Activated CD4-positive, alpha-beta memory T cell treated with anti-CD3 and anti-CD28 coated beads, Interleukin-2, amount 10 ng/mL, durations not matched to agents 7 days and 5 days (primary cell): ENCODE measurements at regions of chr3 and their contacts with region 1.

Region 1: GRCh38 chr3:18717598-18717997 is 292.5 kb upstream of the SATB1 start:
- DNase-seq: no peak
- H3K4me3 Mint-ChIP-seq: peak overlapping the region; percentile 43
- H3K27ac Mint-ChIP-seq: peak overlapping the region; percentile 99
- H3K4me1 Mint-ChIP-seq: peaks cover 72% of the 10 kb centered on the region
- H3K27me3 Mint-ChIP-seq: no peaks in the 10 kb centered on the region

Region 2: GRCh38 chr3:18424729-18425640 is 292.6 kb before region 1 on chr3 and contains the start of gene SATB1:
- CTCF ChIA-PET with region 1: no interaction called
- POLR2A ChIA-PET with region 1: interaction called, 15 read pairs
- DNase-seq: peak; percentile 71
- H3K4me3 Mint-ChIP-seq: peak within 1 kb of the TSS; percentile 81
- H3K27ac Mint-ChIP-seq: peak within 1 kb of the TSS; percentile 79
- H3K4me1 Mint-ChIP-seq: peaks cover 67% of the 10 kb centered on the region
- H3K27me3 Mint-ChIP-seq: no peaks in the 10 kb centered on the region
- total RNA-seq, gene SATB1: 263 to 267 TPM

Region 3: DNA sequence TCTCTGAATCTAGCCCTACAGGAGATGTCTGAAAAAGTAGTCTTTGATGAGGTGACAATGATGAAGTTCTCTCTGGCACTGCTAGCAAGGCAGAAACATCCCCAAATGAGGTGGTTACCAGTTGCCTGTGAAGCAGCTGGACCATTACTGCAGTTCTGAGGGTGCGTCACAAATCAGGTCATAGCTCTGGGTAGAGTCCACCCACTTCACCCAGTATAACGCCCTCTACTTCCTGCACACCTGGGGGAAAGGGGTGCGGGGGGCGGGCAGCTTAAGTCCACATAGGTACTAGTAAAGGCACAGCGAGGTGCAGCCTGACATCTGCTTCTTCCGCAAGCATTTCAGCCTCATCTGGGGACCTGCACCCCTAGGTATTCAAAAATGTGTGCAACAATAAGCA is 279.0 kb before region 1 on chr3:
- CTCF ChIA-PET with region 1: no interaction called
- POLR2A ChIA-PET with region 1: interaction called, 128 read pairs
- DNase-seq: peak; percentile 67
- H3K4me3 Mint-ChIP-seq: peak overlapping the region; percentile 73
- H3K27ac Mint-ChIP-seq: peak overlapping the region; percentile 84
- H3K4me1 Mint-ChIP-seq: peaks cover 51% of the 10 kb centered on the region
- H3K27me3 Mint-ChIP-seq: no peaks in the 10 kb centered on the region

Region 4: DNA sequence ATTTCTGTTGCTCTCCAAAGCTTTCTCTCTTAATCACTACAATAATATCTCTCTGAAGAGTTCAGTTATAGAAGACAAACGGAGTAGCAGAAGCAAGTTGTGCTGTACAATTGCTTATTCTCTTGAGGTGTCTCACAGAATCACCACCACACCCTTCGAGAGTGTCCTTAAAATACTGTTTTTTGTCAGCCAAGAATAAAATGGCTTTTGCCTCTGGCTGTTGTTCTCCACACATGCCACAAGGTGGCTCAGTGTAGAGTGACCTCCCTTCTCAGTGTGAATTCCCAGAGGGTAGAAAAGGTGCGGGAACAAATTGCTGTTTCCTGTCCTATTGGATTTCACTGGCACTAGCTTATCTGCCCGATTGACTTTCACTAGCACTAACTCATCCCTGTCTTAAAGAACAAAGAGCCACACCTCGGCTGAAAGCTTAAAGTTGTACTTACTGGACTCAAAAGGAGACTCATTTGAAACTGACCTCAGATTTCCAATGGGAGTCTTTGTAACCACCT is 158.2 kb before region 1 on chr3:
- CTCF ChIA-PET with region 1: interaction called, 19 read pairs
- POLR2A ChIA-PET with region 1: interaction called, 8 read pairs
- DNase-seq: peak; percentile 42
- H3K4me3 Mint-ChIP-seq: no peak overlapping the region
- H3K27ac Mint-ChIP-seq: peak overlapping the region; percentile 80
- H3K4me1 Mint-ChIP-seq: peaks cover 59% of the 10 kb centered on the region
- H3K27me3 Mint-ChIP-seq: no peaks in the 10 kb centered on the region

Region 5: DNA sequence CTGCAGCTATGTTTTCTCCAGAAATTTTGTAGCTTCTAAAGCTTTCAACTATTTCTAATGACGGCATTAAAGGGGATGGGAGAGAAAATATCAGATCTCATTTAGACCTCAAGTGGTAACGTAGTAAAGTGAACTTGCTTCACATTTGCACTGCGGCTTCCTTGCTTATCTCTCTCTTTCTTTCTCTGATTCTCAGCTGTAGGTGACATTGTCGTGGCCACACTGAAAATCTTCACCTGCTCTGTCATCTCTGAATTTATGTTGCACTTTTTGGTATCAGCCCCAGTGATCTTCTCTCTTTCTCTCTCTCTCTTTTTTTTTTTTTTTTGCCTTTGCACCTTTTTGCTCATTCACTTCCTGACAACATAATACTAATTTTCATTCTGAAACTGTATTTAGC is 38.4 kb before region 1 on chr3:
- CTCF ChIA-PET with region 1: interaction called, 11 read pairs
- POLR2A ChIA-PET with region 1: interaction called, 24 read pairs
- DNase-seq: peak; percentile 64
- H3K4me3 Mint-ChIP-seq: peak overlapping the region; percentile 43
- H3K27ac Mint-ChIP-seq: peak overlapping the region; percentile 85
- H3K4me1 Mint-ChIP-seq: peaks cover 79% of the 10 kb centered on the region
- H3K27me3 Mint-ChIP-seq: no peaks in the 10 kb centered on the region

Region 6: GRCh38 chr3:18758047-18758704 is 40.6 kb after region 1 on chr3:
- CTCF ChIA-PET with region 1: interaction called, 29 read pairs
- POLR2A ChIA-PET with region 1: interaction called, 11 read pairs
- DNase-seq: no peak
- H3K4me3 Mint-ChIP-seq: no peak overlapping the region
- H3K27ac Mint-ChIP-seq: peak overlapping the region; percentile 40
- H3K4me1 Mint-ChIP-seq: peaks cover 36% of the 10 kb centered on the region
- H3K27me3 Mint-ChIP-seq: no peaks in the 10 kb centered on the region

Region 7: GRCh38 chr3:18827664-18828063 is 110.1 kb after region 1 on chr3:
- CTCF ChIA-PET with region 1: no interaction called
- POLR2A ChIA-PET with region 1: no interaction called
- DNase-seq: no peak
- H3K4me3 Mint-ChIP-seq: no peak overlapping the region
- H3K27ac Mint-ChIP-seq: no peak overlapping the region
- H3K4me1 Mint-ChIP-seq: peaks cover 6% of the 10 kb centered on the region
- H3K27me3 Mint-ChIP-seq: no peaks in the 10 kb centered on the region